ENCODE measurements at regions of chr3 and their contacts with region 1.

Region 1: GRCh38 chr3:8607234-8608040 is 37.2 kb downstream of the SSUH2 start:
- DNase-seq: peak; percentile 82
- H3K4me3 ChIP-seq: no peak overlapping the region
- H3K27ac ChIP-seq: no peak overlapping the region
- H3K4me1 ChIP-seq: peaks cover 17% of the 10 kb centered on the region
- H3K27me3 ChIP-seq: no peaks in the 10 kb centered on the region

Region 2: GRCh38 chr3:8345398-8345797 is 262.0 kb before region 1 on chr3:
- in situ Hi-C with region 1: no loop called
- DNase-seq: peak; percentile 6
- H3K4me3 ChIP-seq: no peak overlapping the region
- H3K27ac ChIP-seq: no peak overlapping the region
- H3K4me1 ChIP-seq: no peaks in the 10 kb centered on the region
- H3K27me3 ChIP-seq: no peaks in the 10 kb centered on the region; the same call in 1 of the 2 replicates

Region 3: DNA sequence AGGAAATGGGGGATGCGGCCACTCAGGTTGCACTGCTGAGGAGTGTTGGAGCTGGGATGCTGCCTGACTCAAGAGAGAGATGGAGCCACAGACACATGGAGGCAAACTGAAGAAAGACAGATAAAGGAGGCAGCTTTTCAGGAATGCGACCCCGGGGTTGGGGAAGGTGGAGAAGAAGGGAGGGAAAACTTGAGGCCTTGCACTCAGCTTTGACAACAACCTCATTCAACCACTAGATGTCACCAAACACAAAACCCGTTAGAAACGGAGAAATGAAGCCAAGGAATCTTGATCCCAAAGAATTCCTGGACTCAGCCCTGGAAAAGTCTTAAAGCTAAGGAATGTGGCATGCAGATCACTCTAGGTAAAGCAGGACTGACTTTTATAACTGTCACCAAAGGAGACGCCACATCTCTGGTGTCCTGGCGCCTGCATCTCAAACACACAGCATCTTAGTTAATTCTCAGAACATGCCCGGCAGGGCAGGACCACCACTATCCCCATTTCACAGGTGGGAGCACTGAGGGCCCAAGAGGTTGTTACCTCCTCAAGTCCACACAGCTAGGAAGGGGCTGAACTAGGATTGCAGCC is 165.4 kb before region 1 on chr3:
- in situ Hi-C with region 1: loop called (anchors 5 kb)
- DNase-seq: peak; percentile 77
- H3K4me3 ChIP-seq: no peak overlapping the region
- H3K27ac ChIP-seq: no peak overlapping the region
- H3K4me1 ChIP-seq: peaks cover 45% of the 10 kb centered on the region
- H3K27me3 ChIP-seq: no peaks in the 10 kb centered on the region

Measured in GM23248 (cell line).